AG04449 (cell line): ENCODE measurements at regions of chr7 and their contacts with region 1.

Region 1: DNA sequence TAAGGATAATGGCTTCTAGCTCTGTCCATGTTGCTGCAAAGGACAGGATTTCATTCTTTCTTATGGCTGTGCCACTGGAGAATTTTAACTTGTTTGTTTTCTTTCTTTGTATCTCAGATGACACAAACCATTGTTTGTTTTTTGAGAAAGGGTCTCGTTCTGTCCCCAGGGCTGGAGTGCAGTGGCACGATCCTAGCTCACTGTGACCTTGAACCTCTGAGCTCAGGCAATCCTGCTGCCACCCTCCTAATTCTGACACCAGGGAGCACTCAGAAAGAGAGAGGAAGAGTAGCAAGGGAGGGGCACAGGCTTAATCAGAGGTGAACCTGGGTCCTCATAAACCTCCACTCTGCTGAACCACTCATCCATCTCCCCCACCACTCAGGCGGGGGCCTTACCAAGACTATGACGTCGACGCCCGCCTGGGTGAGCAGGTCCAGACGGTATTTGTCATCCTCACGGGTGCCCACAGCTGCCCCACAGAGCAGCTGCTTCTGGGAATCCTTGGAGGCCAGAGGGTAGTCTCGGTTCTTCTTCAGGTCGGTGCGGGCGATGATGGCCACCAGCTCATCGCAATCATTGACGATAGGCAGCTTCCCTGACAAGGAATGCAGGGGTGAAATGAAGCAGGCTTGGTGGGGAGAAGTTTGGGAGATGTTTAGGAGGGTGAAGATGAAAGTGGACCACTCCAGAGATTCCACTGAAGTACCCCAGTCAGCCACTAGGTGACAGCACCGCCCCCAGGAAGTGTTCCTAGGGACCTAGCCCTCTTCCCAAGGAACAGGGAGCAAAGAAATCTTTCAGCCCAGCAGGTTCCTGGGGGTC is 11.6 kb downstream of the IMPDH1 start:
- DNase-seq: no peak
- H3K4me3 ChIP-seq: no peak overlapping the region
- CTCF ChIP-seq: peak; percentile 86

Region 2: DNA sequence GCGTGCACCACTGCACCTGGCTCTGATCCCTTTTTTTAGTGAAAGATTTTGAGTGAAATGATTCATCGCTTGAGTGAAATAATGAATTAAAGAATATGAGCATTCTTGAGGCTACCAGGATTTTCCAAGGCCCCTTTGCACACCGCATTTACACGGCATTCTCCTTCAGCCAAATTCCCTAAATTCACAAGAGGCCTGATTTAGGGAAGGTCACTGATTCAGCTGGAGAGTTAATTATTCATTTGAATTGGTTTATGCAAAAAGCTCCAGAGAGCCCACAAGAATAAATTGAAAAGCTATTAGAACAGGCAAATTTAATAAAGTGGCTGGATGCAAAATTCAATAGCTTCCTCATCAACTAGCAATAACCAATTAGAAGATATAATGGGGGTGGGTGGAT is 110.7 kb before region 1 on chr7:
- CTCF ChIA-PET with region 1: no interaction called
- POLR2A ChIA-PET with region 1: no interaction called
- DNase-seq: no peak
- H3K4me3 ChIP-seq: no peak overlapping the region
- CTCF ChIP-seq: no peak

Region 3: DNA sequence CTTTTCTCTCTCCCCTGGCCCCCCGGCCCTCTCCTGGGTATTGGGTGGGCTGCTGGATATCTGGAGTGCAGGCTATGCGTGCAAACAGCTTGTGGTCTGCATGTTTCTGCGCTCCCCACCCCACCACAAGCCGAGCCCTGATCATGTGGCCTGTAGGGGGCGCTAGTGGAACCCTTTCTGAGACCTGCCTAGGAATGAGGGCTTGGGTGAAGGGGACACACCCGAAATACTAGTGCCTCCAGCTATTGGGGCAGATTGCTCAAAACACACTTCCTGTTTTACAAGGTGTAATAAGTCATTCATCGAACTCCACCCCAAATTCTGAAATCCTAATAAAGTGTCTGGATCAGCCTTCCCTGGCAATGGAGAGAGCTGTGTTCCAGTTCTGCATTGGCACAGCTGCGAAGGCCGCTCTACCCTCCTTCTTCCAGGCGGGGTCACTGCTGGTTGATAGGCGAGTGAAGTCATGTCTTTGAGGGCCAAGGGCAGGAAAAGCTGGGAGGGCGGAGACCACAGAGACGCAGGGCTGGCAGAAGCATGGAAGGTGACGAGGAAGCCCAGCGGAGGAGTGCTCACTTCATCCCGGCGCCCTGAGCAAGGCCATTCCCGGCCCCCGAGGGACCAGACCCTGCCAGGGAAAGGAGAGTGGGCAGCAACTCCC is 16.9 kb before region 1 on chr7:
- CTCF ChIA-PET with region 1: interaction called, 145 read pairs
- POLR2A ChIA-PET with region 1: no interaction called
- DNase-seq: no peak
- H3K4me3 ChIP-seq: no peak overlapping the region
- CTCF ChIP-seq: peak; percentile 49

Region 4: DNA sequence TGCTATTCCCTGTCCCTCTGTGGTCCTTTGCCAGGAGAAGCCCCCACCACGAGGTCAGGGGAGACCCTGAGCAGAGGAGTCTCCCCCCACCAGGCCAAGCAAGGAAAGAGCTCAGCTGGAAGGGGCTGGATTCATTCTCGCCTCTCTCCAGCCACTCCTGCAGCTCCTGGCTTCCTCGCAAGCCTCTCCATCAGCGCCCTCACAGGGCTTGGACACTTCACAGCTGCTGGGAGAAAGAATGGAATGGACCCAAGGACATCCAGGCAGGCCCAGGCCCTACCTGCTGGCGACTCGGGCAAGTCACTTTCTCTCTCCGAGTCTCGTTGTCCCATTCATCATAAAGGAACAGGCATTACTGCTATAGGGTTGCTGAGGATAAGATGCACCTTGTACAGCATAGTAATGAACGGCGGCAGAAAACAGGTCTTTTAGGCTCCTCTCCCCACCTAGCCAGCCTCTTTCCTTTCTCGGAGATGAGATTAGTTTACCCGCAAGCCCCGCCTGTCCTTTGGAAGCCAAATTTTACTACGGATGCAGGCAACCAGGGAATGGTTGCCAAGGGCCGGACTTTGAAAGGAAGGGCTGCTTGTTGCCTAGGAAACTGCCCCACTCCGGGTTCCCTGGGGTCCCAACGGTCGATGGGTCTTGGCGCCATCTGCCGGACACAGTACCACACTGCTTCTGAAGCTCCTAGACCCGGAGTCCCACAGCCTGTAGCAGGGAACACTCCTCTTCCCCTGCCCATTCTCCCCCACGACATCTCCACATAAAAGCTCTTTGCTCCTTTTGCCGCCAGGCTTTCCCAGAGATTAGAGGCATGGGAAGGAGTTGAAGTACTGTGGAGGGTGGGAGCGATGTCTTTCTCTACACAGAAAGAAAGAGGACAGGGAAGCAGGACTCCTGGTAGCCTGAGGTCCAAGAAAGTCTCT is 10.7 kb before region 1 on chr7:
- CTCF ChIA-PET with region 1: interaction called, 145 read pairs
- POLR2A ChIA-PET with region 1: no interaction called
- DNase-seq: no peak
- H3K4me3 ChIP-seq: no peak overlapping the region
- CTCF ChIP-seq: peak; percentile 89

Region 5: DNA sequence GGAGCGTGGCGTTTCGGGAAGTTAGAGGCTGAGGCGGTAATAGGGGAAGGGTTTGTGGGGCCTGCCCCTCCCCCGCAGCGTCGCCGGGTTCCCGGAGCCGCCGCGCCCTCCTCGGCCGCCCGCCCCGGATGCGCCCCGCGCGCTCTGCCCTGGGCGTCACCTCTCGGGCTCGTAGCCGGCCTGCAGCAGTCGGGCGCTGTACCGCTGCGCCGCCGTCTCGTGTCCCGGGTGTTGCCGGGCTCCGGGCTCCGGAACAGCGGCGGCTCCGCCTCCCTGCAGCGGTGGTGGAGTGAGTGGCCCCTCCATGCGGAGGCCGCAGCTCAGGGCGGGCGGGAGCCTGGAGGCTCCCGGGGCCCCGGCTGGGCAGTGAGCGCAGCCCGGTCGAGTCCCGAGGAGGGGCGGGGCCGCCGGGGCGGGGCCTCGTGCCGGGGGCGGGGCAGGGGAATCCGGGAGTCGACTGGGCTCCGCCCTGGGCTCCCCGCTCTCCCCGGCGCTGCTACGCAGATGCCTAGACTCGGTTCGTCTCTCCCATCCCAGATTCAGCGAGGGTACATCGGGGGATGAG is 11.4 kb after region 1 on chr7 and contains the start of gene IMPDH1:
- CTCF ChIA-PET with region 1: interaction called, 34 read pairs
- POLR2A ChIA-PET with region 1: interaction called, 3 read pairs
- DNase-seq: no peak
- H3K4me3 ChIP-seq: peak within 1 kb of the TSS; percentile 85
- CTCF ChIP-seq: no peak

Region 6: DNA sequence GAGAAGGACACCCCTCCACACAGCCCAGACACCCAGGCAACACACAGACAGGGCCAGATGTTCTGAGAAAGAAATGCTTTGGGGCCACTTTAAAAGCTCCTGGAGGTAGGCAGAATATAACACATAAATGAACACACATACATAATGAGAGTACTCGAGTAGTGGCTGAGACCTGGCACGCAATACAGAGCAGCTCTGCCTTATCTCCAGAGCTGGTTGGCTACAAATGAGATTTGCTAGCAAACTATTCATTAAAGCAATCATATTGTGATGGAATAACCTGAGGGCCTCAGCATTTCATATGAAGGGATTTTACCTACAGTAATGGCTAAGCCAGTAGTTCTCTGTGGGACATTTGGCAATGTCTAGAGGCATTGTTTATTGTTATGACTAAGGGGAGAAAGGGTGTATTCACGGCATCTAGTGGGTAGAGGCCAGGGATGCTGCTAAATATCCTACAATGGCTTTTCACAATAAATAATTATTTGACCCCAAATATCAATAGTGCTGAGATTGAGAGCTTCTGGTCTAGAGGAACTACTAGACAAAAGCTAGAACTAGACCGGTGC is 17.1 kb after region 1 on chr7:
- CTCF ChIA-PET with region 1: interaction called, 33 read pairs
- POLR2A ChIA-PET with region 1: no interaction called
- DNase-seq: no peak
- H3K4me3 ChIP-seq: no peak overlapping the region
- CTCF ChIP-seq: no peak

Region 7: DNA sequence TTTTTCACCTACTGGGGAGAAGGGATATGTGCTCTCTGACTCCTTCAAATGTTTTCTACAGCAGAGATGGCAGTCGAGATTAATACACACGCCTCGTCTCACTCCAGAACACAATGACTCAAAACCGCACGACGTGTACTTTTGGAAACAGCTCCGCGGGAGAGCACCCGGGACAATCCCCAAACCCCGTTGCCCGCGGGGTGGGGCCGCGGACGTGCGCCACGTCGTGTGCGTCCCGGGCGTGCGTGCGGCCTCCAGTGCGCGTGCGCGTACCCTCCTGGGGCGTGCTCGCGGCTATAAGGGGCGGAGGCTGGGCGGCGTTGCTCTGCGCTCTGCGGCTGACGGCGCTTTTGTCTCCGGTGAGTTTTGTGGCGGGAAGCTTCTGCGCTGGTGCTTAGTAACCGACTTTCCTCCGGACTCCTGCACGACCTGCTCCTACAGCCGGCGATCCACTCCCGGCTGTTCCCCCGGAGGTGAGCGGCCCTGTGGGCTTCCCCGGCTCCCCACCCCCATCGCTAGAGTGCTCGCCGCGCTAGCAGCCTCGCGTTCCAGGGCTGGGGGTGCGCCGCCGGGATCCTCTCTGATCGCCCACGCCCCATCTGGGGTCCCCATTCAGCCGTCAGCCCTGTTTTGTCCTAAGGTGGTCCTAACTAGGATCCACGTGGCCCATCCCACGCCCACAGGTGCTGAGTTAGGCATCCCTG is 57.5 kb after region 1 on chr7 and contains the start of gene HILPDA:
- CTCF ChIA-PET with region 1: interaction called, 34 read pairs
- POLR2A ChIA-PET with region 1: no interaction called
- DNase-seq: peak; percentile 82
- H3K4me3 ChIP-seq: peak within 1 kb of the TSS; percentile 99
- CTCF ChIP-seq: no peak

Region 8: GRCh38 chr7:128681794-128682537 is 283.7 kb after region 1 on chr7:
- CTCF ChIA-PET with region 1: no interaction called
- POLR2A ChIA-PET with region 1: no interaction called
- DNase-seq: no peak
- H3K4me3 ChIP-seq: no peak overlapping the region
- CTCF ChIP-seq: no peak

Region 9: DNA sequence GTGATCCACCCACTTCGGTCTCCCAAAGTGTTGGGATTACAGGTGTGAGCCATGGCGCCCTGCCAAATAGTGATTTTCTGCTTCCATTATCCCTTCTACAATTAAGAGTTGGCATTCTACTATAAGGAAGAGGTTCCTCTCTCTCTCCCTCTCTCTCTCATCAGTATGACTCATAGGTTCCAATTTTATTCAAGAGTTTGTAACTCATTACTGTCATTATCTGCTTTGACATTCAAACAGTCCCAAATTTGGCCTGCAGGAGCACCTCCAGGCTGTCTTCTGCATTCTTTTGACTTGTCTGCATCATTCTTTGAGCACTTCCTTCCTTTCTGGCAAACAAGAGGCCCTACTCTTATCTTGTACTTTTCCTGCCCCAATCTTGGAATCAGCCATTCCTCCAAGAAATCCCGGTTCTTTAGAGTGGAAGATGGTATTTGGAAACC is 307.7 kb after region 1 on chr7:
- CTCF ChIA-PET with region 1: no interaction called
- POLR2A ChIA-PET with region 1: no interaction called
- DNase-seq: no peak
- H3K4me3 ChIP-seq: no peak overlapping the region
- CTCF ChIP-seq: no peak